Left cardiac atrium (tissue), 4 donors: ENCODE measurements at regions of chr2 and their contacts with region 1.

Region 1: DNA sequence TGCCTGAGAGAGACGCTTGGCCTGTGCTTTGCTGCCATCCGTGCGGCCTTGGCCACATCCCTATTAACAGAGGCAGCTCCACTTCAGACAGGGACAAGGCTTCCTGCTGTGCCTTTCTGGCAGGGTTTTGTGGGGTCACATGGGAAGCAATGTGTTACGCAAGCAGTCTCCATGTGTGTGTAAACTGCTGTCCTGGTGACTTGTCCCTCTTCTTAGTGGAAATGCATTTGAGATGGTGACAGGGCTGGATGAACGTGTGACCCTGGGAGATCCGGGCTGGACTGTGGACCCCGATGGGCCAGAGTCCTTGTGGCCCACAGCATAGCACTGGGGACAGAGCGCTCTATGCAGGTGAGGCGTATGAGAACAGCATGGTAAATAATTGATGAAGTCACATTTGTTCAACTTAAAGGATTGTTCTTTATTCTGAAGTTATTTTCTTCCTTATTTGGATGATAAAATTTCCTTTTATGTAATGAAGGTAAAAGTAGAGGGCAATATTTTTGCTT is 23.2 kb downstream of the ASB1 start:
- DNase-seq: peak; percentile 74
- ATAC-seq: peak; percentile 89 to 92

Region 2: GRCh38 chr2:238030422-238031154 is 419.4 kb before region 1 on chr2:
- intact Hi-C with region 1: no loop called
- DNase-seq: no peak
- ATAC-seq: no peak

Region 3: DNA sequence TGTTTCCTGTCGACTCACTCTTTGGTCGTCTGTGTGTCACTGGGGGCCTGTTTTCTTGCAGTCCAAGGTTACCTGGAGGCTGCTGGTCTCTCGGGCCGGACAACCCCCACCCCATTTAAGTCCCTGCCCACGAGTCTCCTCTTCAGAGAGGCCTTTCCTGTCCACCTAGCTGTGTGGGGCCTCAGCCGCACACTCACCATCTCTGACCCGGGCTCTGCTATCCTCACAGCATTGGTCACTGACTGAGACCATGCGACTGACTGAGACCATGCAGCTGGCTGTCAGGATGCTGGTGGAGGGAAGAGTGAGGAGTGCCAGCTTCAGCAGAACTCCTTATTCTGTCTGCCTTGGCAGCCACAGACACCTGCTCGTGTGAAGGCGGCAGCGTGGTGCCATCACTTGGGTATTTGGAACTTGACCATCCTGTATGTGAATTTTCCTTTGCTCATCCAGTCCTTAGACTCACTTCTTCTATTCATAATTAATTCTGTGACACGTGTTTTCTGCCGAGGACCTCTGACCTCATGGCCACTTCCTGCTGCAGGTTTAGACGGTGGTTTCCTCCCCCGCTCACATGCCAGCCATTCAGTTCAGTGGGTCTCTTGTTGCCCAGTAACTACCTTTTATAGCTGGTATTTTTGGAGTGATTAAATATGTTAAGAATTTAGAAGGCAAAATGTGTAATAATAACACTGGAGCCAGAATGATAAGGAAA is 70.7 kb before region 1 on chr2:
- intact Hi-C with region 1: loop called in 1 of 2 experiments (anchors 5 kb)
- DNase-seq: no peak
- ATAC-seq: peak; percentile 38 to 82

Region 4: GRCh38 chr2:238573065-238573778 is 123.3 kb after region 1 on chr2:
- intact Hi-C with region 1: no loop called
- DNase-seq: no peak
- ATAC-seq: peak in 1 of 2 donors; percentile 10